SK-N-SH (cell line): ENCODE measurements at regions of chr13 and their contacts with region 1.

Region 1: GRCh38 chr13:29911781-29912418 is 61.5 kb upstream of the UBL3 start:
- DNase-seq: no peak
- H3K4me3 ChIP-seq: no peak overlapping the region
- H3K27ac ChIP-seq: no peak overlapping the region
- H3K4me1 ChIP-seq: peaks cover 0 to 14% of the 10 kb centered on the region in 2 experiments; a peak in 2 of 4 replicates
- H3K27me3 ChIP-seq: no peaks in the 10 kb centered on the region
- CTCF ChIP-seq: no peak
- EP300 ChIP-seq: no peak
- RAD21 ChIP-seq: no peak

Region 2: GRCh38 chr13:29923554-29924481 is 11.9 kb after region 1 on chr13:
- CTCF ChIA-PET with region 1: interaction called, 11 read pairs
- POLR2A ChIA-PET with region 1: no interaction called
- DNase-seq: peak; percentile 38
- H3K4me3 ChIP-seq: peak overlapping the region in 1 of 2 experiments; percentile 35; a peak in 2 of 4 replicates
- H3K27ac ChIP-seq: peak overlapping the region; percentile 62 to 84
- H3K4me1 ChIP-seq: peaks cover 14 to 45% of the 10 kb centered on the region in 2 experiments; a peak in 3 of 4 replicates
- H3K27me3 ChIP-seq: no peaks in the 10 kb centered on the region
- CTCF ChIP-seq: peak; percentile 99
- EP300 ChIP-seq: peak in 1 of 2 experiments; percentile 28; a peak in 2 of 4 replicates
- RAD21 ChIP-seq: peak; percentile 25